H1 (cell line): ENCODE measurements at regions of chr18 and their contacts with region 1.

Region 1: DNA sequence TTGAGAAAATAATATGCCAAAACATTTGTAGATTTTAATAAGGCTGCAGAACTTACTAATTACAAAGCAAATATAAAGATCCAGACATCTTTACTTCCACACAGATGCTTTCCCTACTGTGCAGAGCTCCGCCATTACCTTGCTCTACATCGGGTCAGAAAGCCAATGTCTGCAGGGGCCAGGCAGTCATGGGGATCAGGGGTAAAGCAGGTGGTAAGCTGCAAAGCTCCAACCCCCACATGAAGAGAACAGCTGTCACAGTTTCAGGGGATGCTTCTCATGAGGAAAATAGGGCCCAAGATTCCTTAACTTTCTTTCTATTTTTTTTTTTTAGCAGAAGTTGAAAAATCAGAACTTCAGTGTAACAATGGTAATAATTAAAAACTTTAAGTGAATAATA is 102.7 kb downstream of the DCC start:
- DNase-seq: no peak
- H3K4me3 ChIP-seq: no peak overlapping the region
- H3K27ac ChIP-seq: no peak overlapping the region
- H3K4me1 ChIP-seq: no peaks in the 10 kb centered on the region
- H3K27me3 ChIP-seq: no peaks in the 10 kb centered on the region
- CTCF ChIP-seq: no peak
- EP300 ChIP-seq: no peak
- POLR2A ChIP-seq: no peak
- RAD21 ChIP-seq: no peak

Region 2: GRCh38 chr18:52237551-52237950 is 205.1 kb before region 1 on chr18:
- CTCF ChIA-PET with region 1: no interaction called
- POLR2A ChIA-PET with region 1: no interaction called
- DNase-seq: no peak
- H3K4me3 ChIP-seq: no peak overlapping the region
- H3K27ac ChIP-seq: no peak overlapping the region
- H3K4me1 ChIP-seq: no peaks in the 10 kb centered on the region
- H3K27me3 ChIP-seq: no peaks in the 10 kb centered on the region
- CTCF ChIP-seq: no peak
- EP300 ChIP-seq: no peak
- POLR2A ChIP-seq: no peak
- RAD21 ChIP-seq: no peak

Region 3: DNA sequence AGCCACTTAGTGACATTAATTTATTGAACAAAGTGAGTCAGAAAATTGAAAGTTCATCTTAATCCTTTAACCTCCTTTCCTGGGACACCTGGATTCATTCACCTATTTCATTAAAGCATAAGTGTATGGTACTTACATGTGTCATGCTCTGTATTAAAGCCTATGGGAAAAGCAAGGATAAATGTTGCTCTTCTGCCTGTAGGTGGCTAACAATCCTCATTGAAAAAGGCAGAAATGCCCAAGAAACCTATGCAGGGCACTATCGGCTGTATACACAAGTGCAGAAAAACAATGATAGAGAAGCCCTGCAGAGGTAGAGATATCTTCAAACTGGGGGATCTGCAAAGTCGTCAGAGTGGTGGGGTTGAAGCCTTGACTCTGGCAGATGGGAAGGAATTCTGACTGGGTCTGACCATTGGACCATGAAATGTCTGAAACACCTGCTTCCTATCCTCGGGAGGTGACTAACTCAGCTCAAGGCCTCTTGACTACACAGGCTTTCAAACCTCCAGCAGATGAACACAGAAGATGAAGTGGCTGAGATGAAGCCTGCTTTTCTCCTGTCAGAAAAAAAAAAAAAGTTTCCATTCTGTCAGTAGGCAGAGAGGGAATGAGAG is 19.6 kb before region 1 on chr18:
- CTCF ChIA-PET with region 1: interaction called, 10 read pairs
- POLR2A ChIA-PET with region 1: no interaction called
- DNase-seq: no peak
- H3K4me3 ChIP-seq: no peak overlapping the region
- H3K27ac ChIP-seq: no peak overlapping the region
- H3K4me1 ChIP-seq: no peaks in the 10 kb centered on the region
- H3K27me3 ChIP-seq: no peaks in the 10 kb centered on the region
- CTCF ChIP-seq: peak in 1 of 3 experiments; percentile 27; a peak in 1 of 4 replicates
- EP300 ChIP-seq: no peak
- POLR2A ChIP-seq: no peak
- RAD21 ChIP-seq: peak; percentile 26 to 41; a peak in 3 of 4 replicates